Mammary epithelial cell (primary cell): ENCODE measurements at regions of chr12 and their contacts with region 1.

Region 1: DNA sequence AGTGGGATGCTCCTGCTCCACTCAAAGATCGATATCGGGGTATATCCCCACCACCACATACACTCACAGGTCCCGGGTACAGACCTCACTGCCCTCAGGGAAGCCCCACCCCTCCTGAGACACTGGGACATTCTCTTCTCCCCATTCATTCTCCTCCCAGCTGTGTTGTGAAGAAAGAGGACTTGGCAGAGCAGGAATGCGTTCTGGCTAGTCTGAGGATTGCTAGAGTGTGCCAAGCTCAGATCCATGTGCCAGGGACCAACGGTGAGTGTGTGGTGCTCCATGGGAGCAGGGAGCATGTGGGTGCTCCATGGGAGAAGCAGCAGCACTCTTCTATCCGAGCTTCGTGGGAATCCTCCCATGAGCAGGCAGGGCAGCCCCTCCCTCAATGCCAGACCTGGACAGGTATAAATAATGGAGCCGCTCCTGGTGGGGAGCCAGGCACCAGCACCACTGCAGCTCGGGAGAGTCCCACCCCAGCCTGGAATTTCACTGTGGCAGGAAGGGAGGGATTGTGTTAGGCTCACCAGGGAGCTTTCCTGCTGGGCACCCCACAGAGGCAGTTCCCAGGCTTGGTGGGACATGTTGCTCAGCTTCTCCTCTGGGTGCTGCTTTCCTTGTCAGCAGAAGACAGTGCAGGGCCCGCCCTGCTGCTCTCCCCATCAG is 2.3 kb upstream of the KRT5 start:
- DNase-seq: peak; percentile 97
- H3K4me3 ChIP-seq: peak overlapping the region; percentile 1 to 32 (median 16)
- H3K27ac ChIP-seq: peak overlapping the region; percentile 99
- H3K4me1 ChIP-seq: peaks cover 61% of the 10 kb centered on the region
- H3K27me3 ChIP-seq: no peaks in the 10 kb centered on the region
- CTCF ChIP-seq: no peak

Region 2: DNA sequence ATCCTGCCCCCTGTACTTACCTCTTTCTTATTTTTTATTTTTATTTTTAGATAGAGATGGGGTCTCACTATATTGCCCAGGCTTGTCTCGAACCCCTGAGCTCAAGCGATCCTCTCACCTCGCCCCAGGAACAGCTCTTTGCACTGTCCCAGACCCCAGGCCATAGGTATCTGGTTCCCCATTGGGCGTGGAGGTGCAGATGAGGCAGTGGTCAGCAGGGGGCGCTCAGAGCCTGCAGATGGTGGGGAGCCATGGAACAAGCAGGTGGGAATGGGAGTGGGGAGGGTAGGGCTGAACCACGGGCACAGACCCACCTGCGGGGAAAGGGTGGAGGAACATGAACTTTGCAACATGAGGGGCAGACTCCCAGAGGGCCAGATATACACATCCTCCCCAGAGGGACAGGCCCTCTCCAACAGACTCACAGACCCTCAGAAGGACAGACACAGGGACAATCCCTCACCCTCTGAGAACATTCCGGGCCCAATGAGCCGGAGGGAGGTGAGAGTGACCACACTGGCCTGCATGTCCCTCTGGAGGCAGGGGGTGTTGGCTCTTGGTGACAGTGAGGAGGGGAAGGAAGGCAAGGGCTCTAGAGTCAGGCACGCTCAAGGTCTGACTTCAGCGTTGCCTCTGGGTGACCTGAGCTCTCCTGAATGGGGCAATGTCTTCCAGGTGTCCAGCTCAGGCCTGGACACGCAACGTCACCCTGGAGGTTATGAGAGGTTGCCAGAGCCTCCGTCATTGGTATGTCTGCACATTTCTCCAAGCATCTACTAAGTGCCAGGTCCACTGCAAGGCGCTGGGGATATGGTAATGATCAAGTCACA is 365.5 kb before region 1 on chr12:
- CTCF ChIA-PET with region 1: no interaction called
- dilution Hi-C with region 1: no loop called
- in situ Hi-C with region 1: no loop called
- intact Hi-C with region 1: loop called (anchors 1 kb)
- DNase-seq: peak; percentile 80
- H3K4me3 ChIP-seq: no peak overlapping the region
- H3K27ac ChIP-seq: peak overlapping the region; percentile 96
- H3K4me1 ChIP-seq: peaks cover 46% of the 10 kb centered on the region
- H3K27me3 ChIP-seq: no peaks in the 10 kb centered on the region
- CTCF ChIP-seq: peak; percentile 90 to 98

Region 3: GRCh38 chr12:52390739-52391617 is 131.5 kb before region 1 on chr12:
- CTCF ChIA-PET with region 1: interaction called, 6 read pairs
- dilution Hi-C with region 1: no loop called
- in situ Hi-C with region 1: loop called in 1 of 2 experiments (anchors 5 kb)
- intact Hi-C with region 1: loop called (anchors 1 kb)
- DNase-seq: no peak
- H3K4me3 ChIP-seq: no peak overlapping the region
- H3K27ac ChIP-seq: peak overlapping the region; percentile 19
- H3K4me1 ChIP-seq: peaks cover 59% of the 10 kb centered on the region
- H3K27me3 ChIP-seq: no peaks in the 10 kb centered on the region
- CTCF ChIP-seq: peak; percentile 89 to 90

Region 4: GRCh38 chr12:52495389-52495788 is 27.1 kb before region 1 on chr12:
- CTCF ChIA-PET with region 1: no interaction called
- dilution Hi-C with region 1: no loop called
- in situ Hi-C with region 1: no loop called
- intact Hi-C with region 1: loop called (anchors 1 kb)
- DNase-seq: peak; percentile 72
- H3K4me3 ChIP-seq: no peak overlapping the region
- H3K27ac ChIP-seq: peak overlapping the region; percentile 99
- H3K4me1 ChIP-seq: peaks cover 69% of the 10 kb centered on the region
- H3K27me3 ChIP-seq: no peaks in the 10 kb centered on the region
- CTCF ChIP-seq: peak in 1 of 2 donors; percentile 31

Region 5: DNA sequence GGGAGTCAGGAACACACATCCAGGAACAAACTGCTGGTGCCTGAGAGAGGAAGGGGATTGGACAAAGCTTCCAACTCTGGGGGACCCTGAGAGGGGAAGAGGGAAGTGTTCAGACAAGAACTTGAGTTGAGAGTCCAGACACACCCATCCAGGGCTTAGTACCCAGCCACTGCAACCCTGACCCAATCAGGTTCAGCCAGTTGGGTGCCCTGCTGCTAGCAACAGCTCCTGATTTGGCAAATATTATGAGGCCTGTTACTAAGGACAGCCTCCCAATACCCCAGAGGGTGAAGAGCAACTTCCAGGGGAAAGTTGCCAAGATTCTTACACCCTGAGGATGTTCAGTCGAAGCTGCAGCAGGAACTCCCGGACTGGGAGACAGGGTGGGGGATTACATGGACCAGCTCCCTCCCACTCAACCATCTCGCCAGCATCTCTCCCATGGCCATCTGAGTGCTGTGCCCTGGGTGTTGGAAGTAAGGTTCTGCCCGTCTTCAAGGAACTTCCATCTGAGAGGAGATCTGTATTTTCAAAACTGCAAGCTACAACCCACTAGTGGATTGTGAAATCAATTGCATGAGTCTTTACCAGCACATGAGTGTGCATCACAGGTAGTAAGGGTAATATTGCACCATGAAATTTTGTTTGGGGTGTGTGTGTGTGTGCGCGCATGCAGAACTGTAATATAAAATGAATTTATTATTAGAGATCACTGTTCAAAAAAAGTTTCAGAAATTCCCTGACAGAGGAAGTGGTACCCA is 337.8 kb after region 1 on chr12:
- CTCF ChIA-PET with region 1: no interaction called
- dilution Hi-C with region 1: loop called (anchors 5 kb)
- in situ Hi-C with region 1: no loop called
- intact Hi-C with region 1: no loop called
- DNase-seq: peak; percentile 88
- H3K4me3 ChIP-seq: peak overlapping the region in 1 of 3 experiments; percentile 12
- H3K27ac ChIP-seq: peak overlapping the region; percentile 89
- H3K4me1 ChIP-seq: peaks cover 25% of the 10 kb centered on the region
- H3K27me3 ChIP-seq: no peaks in the 10 kb centered on the region
- CTCF ChIP-seq: no peak

Region 6: DNA sequence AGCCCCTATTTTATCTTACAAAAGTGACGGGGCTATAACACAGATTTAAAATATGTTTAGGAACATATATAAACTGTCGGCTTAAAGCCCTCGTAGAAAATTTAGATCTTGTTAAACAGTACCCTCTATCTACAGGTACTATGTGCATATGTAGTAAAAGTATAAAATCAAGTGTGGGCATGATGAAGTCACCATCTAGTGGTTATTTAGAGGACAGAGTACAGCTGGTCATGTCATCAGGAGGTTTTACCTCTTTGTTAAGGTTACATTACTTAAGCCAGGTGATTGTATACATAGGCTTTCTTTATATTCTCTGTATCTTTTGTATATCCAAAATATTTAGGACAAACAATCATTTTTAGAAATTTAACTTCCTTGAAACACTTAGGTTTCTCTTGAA is 509.1 kb after region 1 on chr12:
- CTCF ChIA-PET with region 1: no interaction called
- dilution Hi-C with region 1: no loop called
- in situ Hi-C with region 1: no loop called
- intact Hi-C with region 1: no loop called
- DNase-seq: no peak
- H3K4me3 ChIP-seq: no peak overlapping the region
- H3K27ac ChIP-seq: no peak overlapping the region
- H3K4me1 ChIP-seq: no peaks in the 10 kb centered on the region
- H3K27me3 ChIP-seq: no peaks in the 10 kb centered on the region
- CTCF ChIP-seq: no peak